Vagina (tissue), 2 donors: ENCODE measurements at regions of chr21 and their contacts with region 1.

Region 1: GRCh38 chr21:25607151-25608043 is at the start of gene MRPL39:
- DNase-seq: no peak
- H3K4me3 ChIP-seq: peak within 1 kb of the TSS; percentile 57 to 95
- H3K27ac ChIP-seq: peak within 1 kb of the TSS; percentile 87
- H3K4me1 ChIP-seq: peaks cover 29% of the 10 kb centered on the region
- H3K27me3 ChIP-seq: no peaks in the 10 kb centered on the region
- CTCF ChIP-seq: peak; percentile 19 to 37 (median 22)
- POLR2A ChIP-seq: no peak
- total RNA-seq, gene MRPL39: 8.8 TPM

Region 2: DNA sequence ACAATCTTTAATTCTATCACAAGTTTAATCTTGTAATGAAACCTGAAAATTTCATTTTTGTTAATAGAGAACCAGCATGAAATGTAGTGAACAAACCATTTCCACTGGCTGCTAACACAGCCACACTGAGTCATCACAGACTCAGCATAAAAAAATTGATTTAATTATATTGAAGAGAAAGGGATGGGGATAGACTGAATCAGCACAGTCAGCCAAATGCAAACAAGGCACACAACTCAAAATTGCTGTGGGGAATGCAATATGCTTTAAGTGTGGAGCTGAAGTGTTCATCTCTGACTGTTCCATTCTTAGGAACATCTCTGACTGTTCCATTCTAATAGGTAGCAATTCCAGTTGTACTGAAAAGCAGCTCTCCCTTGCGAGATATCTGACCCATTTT is 299.9 kb before region 1 on chr21:
- intact Hi-C with region 1: no loop called
- DNase-seq: no peak
- H3K4me3 ChIP-seq: no peak overlapping the region
- H3K27ac ChIP-seq: no peak overlapping the region
- H3K4me1 ChIP-seq: no peaks in the 10 kb centered on the region
- H3K27me3 ChIP-seq: no peaks in the 10 kb centered on the region
- CTCF ChIP-seq: no peak
- POLR2A ChIP-seq: no peak

Region 3: DNA sequence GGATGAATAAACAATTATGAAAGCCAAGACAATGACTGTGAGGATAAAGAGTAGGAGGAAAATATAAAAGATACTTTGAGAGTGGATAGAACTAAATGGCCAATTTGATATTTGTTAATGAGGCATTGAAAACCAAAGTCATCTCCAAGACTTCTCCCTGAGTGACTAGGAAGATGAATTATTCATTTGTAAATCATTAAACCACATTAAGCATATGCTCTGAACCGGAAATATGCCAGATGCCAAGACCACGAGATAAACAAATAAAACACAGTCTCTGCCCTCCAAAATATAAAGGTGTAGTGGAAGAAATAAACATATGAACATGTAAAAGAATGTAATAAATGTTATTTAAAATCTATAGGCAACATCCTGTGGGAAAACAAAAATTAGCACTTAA is 78.9 kb before region 1 on chr21:
- intact Hi-C with region 1: no loop called
- DNase-seq: no peak
- H3K4me3 ChIP-seq: no peak overlapping the region
- H3K27ac ChIP-seq: no peak overlapping the region
- H3K4me1 ChIP-seq: no peaks in the 10 kb centered on the region
- H3K27me3 ChIP-seq: no peaks in the 10 kb centered on the region
- CTCF ChIP-seq: no peak
- POLR2A ChIP-seq: no peak

Region 4: DNA sequence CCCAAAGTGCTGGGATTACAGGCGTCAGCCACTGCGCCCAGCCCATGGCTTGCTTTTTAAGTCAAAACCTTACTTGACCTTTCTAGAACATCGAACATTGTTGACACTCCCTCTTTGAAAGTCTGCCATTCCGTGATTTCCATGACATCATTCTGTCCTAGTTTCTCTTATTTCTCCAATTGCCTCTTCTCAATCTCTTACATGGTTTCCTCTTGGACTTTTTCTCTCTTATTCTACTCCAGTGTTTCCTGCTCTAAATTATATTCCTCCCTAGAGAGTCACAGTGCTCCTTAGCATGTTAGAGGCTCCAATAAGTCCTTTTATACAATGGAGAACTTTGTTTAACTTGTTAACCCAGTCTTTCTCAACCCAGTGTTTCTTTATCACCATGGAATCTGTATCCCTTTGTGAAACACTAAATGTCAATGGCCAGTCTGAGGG is 57.1 kb after region 1 on chr21:
- intact Hi-C with region 1: no loop called
- DNase-seq: no peak
- H3K4me3 ChIP-seq: no peak overlapping the region
- H3K27ac ChIP-seq: no peak overlapping the region
- H3K4me1 ChIP-seq: no peaks in the 10 kb centered on the region
- H3K27me3 ChIP-seq: no peaks in the 10 kb centered on the region
- CTCF ChIP-seq: no peak
- POLR2A ChIP-seq: no peak

Region 5: GRCh38 chr21:25708467-25709065 is 101.2 kb after region 1 on chr21:
- intact Hi-C with region 1: loop called (anchors 2 kb)
- DNase-seq: no peak
- H3K4me3 ChIP-seq: no peak overlapping the region
- H3K27ac ChIP-seq: no peak overlapping the region
- H3K4me1 ChIP-seq: no peaks in the 10 kb centered on the region
- H3K27me3 ChIP-seq: no peaks in the 10 kb centered on the region
- CTCF ChIP-seq: peak; percentile 71 to 83 (median 78)
- POLR2A ChIP-seq: no peak